Astrocyte of the cerebellum (primary cell): ENCODE measurements at regions of chr2 and their contacts with region 1.

Region 1: GRCh38 chr2:188506843-188507242 is 215.2 kb downstream of the GULP1 start:
- DNase-seq: no peak
- H3K4me3 ChIP-seq: no peak overlapping the region
- CTCF ChIP-seq: no peak

Region 2: GRCh38 chr2:187847245-187848208 is 659.3 kb before region 1 on chr2:
- in situ Hi-C with region 1: loop called (anchors 5 kb)
- DNase-seq: no peak
- H3K4me3 ChIP-seq: no peak overlapping the region
- CTCF ChIP-seq: no peak